ENCODE measurements at regions of chr7 and their contacts with region 1.

Region 1: GRCh38 chr7:149856-150636 is 42.3 kb upstream of the FAM20C start:
- H3K4me3 Mint-ChIP-seq: peak overlapping the region; percentile 90
- H3K27ac Mint-ChIP-seq: peak overlapping the region; percentile 95
- H3K4me1 Mint-ChIP-seq: peaks cover 33% of the 10 kb centered on the region
- H3K27me3 Mint-ChIP-seq: no peaks in the 10 kb centered on the region

Region 2: GRCh38 chr7:119392-120163 is 30.5 kb before region 1 on chr7:
- intact Hi-C with region 1: loop called (anchors 5 kb)
- H3K4me3 Mint-ChIP-seq: peak overlapping the region; percentile 60
- H3K27ac Mint-ChIP-seq: peak overlapping the region; percentile 93
- H3K4me1 Mint-ChIP-seq: peaks cover 80% of the 10 kb centered on the region
- H3K27me3 Mint-ChIP-seq: peaks cover 3% of the 10 kb centered on the region

Region 3: GRCh38 chr7:191981-192649 is 42.1 kb after region 1 on chr7 and contains the start of gene FAM20C:
- intact Hi-C with region 1: loop called (anchors 1 kb)
- H3K4me3 Mint-ChIP-seq: peak within 1 kb of the TSS; percentile 88
- H3K27ac Mint-ChIP-seq: peak within 1 kb of the TSS; percentile 72
- H3K4me1 Mint-ChIP-seq: peaks cover 59% of the 10 kb centered on the region
- H3K27me3 Mint-ChIP-seq: peaks cover 38% of the 10 kb centered on the region

Measured in dendritic cell treated with granulocyte-macrophage colony-stimulating factor and Interleukin-4, amounts not matched to agents 40 ng/mL and 50 ng/mL, for 4 days (primary cell).